ENCODE measurements at regions of chr17 and their contacts with region 1.

Region 1: DNA sequence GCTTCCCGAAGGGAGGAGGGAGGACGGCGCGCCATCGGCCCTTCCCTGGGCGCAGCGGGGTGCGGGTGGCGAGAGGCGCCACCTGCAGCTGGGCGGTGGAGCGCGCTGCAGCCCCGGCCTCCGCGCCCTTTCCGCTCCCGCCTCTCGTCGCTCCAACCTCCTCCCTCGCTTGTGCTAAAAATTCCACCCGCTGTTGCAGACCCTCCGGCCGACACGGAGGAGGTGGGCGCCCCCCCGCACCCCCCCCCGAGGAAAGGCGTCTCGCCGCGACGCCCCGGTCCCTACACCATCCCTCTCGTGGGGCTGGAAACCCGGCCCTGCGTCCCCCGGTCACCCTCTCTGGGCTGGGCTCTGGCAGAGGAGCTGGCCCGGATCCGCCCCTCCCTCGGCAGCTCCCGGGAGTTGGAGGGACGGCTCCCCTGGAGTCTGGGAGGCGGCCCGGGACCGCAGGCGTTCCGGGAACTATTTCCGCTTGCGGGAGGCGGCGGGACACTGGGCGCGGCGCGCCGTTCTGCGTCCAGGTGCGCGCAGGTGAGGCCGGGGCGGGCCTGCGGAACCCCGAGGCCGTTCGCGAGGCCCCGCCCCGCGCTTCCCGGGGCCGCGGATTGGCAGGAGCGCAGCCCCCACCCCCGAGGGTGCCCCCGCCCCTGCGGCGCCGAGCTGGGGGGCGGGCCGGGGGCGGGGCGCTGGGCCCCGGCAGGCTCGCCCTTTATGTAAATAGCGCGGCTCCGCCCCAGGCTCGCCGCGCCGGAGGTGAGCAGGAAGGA is at the start of gene LLGL2:
- DNase-seq: peak; percentile 84
- H3K4me3 Mint-ChIP-seq: peak within 1 kb of the TSS; percentile 71
- H3K27ac Mint-ChIP-seq: no peak within 1 kb of the TSS
- H3K4me1 Mint-ChIP-seq: peaks cover 7% of the 10 kb centered on the region
- H3K27me3 Mint-ChIP-seq: no peaks in the 10 kb centered on the region
- CTCF ChIP-seq: peak; percentile 27
- total RNA-seq, gene LLGL2: 19.8 and 21.2 TPM in 2 replicates

Region 2: DNA sequence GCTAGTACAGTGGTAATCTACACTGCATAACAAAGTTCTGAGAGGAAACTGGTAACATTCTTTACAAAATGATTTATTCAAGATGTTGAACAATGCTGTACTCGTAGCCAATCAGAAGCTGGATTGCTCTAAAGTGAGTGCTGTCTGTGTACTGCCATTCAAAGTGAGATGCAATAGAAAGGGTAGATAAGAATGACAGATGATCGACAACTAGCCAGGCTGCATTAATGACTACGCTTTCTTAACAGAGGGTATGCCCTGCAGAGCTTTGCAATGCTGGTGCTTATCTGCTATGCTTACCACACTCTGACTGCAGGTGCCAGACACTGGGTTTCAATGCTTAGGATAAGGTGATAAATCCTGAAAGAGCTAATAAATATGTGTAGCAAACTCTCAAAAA is 189.8 kb before region 1 on chr17:
- CTCF ChIA-PET with region 1: no interaction called
- POLR2A ChIA-PET with region 1: no interaction called
- intact Hi-C with region 1: no loop called
- DNase-seq: no peak
- H3K4me3 Mint-ChIP-seq: no peak overlapping the region
- H3K27ac Mint-ChIP-seq: no peak overlapping the region
- H3K4me1 Mint-ChIP-seq: no peaks in the 10 kb centered on the region
- H3K27me3 Mint-ChIP-seq: no peaks in the 10 kb centered on the region
- CTCF ChIP-seq: no peak

Region 3: GRCh38 chr17:75504347-75504964 is 20.7 kb before region 1 on chr17:
- CTCF ChIA-PET with region 1: interaction called, 4 read pairs
- POLR2A ChIA-PET with region 1: interaction called, 10 read pairs
- intact Hi-C with region 1: no loop called
- DNase-seq: peak; percentile 55
- H3K4me3 Mint-ChIP-seq: no peak overlapping the region
- H3K27ac Mint-ChIP-seq: no peak overlapping the region
- H3K4me1 Mint-ChIP-seq: peaks cover 5% of the 10 kb centered on the region
- H3K27me3 Mint-ChIP-seq: no peaks in the 10 kb centered on the region
- CTCF ChIP-seq: peak; percentile 68

Region 4: GRCh38 chr17:75565068-75565467 is 39.9 kb after region 1 on chr17:
- CTCF ChIA-PET with region 1: no interaction called
- POLR2A ChIA-PET with region 1: interaction called, 11 read pairs
- intact Hi-C with region 1: no loop called
- DNase-seq: peak; percentile 67
- H3K4me3 Mint-ChIP-seq: no peak overlapping the region
- H3K27ac Mint-ChIP-seq: no peak overlapping the region
- H3K4me1 Mint-ChIP-seq: no peaks in the 10 kb centered on the region
- H3K27me3 Mint-ChIP-seq: no peaks in the 10 kb centered on the region
- CTCF ChIP-seq: no peak

Region 5: GRCh38 chr17:75625813-75626486 is 100.8 kb after region 1 on chr17:
- CTCF ChIA-PET with region 1: no interaction called
- POLR2A ChIA-PET with region 1: no interaction called
- intact Hi-C with region 1: no loop called
- DNase-seq: peak; percentile 24
- H3K4me3 Mint-ChIP-seq: no peak overlapping the region
- H3K27ac Mint-ChIP-seq: no peak overlapping the region
- H3K4me1 Mint-ChIP-seq: no peaks in the 10 kb centered on the region
- H3K27me3 Mint-ChIP-seq: peaks cover 17% of the 10 kb centered on the region
- CTCF ChIP-seq: peak; percentile 52

Region 6: GRCh38 chr17:76075364-76076145 is 550.4 kb after region 1 on chr17:
- CTCF ChIA-PET with region 1: no interaction called
- POLR2A ChIA-PET with region 1: no interaction called
- intact Hi-C with region 1: no loop called
- DNase-seq: no peak
- H3K4me3 Mint-ChIP-seq: no peak overlapping the region
- H3K27ac Mint-ChIP-seq: no peak overlapping the region
- H3K4me1 Mint-ChIP-seq: peaks cover 4% of the 10 kb centered on the region
- H3K27me3 Mint-ChIP-seq: peaks cover 54% of the 10 kb centered on the region
- CTCF ChIP-seq: no peak

Measured in MCF 10A (cell line).